ENCODE measurements at regions of chr2 and their contacts with region 1.

Region 1: GRCh38 chr2:3575534-3576262 is 638 bp downstream of the RPS7 start:
- DNase-seq: peak in 1 of 2 experiments; percentile 23
- ATAC-seq: peak; percentile 27 to 70
- H3K4me3 ChIP-seq: peak overlapping the region; percentile 91
- H3K27ac ChIP-seq: peak overlapping the region; percentile 94 to 99
- H3K4me1 ChIP-seq: peaks cover 49% of the 10 kb centered on the region
- CTCF ChIP-seq: no peak
- EP300 ChIP-seq: no peak
- POLR2A ChIP-seq: no peak
- RAD21 ChIP-seq: no peak

Region 2: GRCh38 chr2:3594493-3595281 is 19.0 kb after region 1 on chr2 and contains the start of gene COLEC11:
- CTCF ChIA-PET with region 1: no interaction called
- POLR2A ChIA-PET with region 1: interaction called, 16 read pairs
- DNase-seq: no peak
- ATAC-seq: no peak
- H3K4me3 ChIP-seq: no peak within 1 kb of the TSS
- H3K27ac ChIP-seq: no peak within 1 kb of the TSS
- H3K4me1 ChIP-seq: no peaks in the 10 kb centered on the region
- CTCF ChIP-seq: no peak
- EP300 ChIP-seq: no peak
- POLR2A ChIP-seq: no peak
- RAD21 ChIP-seq: no peak
- polyA plus RNA-seq, gene COLEC11: 0.79 and 0.97 TPM in 2 replicates

Region 3: GRCh38 chr2:3659447-3660432 is 84.0 kb after region 1 on chr2:
- CTCF ChIA-PET with region 1: no interaction called
- POLR2A ChIA-PET with region 1: no interaction called
- DNase-seq: no peak
- ATAC-seq: no peak; a peak in 1 of 6 replicates
- H3K4me3 ChIP-seq: no peak overlapping the region
- H3K27ac ChIP-seq: peak overlapping the region in 1 of 2 experiments; percentile 7; a peak in 1 of 6 replicates
- H3K4me1 ChIP-seq: peaks cover 8% of the 10 kb centered on the region; the same call in 2 of the 3 replicates
- CTCF ChIP-seq: no peak
- EP300 ChIP-seq: no peak
- POLR2A ChIP-seq: no peak
- RAD21 ChIP-seq: no peak

Measured in A549 (cell line).